ENCODE measurements at regions of chr14 and their contacts with region 1.

Region 1: DNA sequence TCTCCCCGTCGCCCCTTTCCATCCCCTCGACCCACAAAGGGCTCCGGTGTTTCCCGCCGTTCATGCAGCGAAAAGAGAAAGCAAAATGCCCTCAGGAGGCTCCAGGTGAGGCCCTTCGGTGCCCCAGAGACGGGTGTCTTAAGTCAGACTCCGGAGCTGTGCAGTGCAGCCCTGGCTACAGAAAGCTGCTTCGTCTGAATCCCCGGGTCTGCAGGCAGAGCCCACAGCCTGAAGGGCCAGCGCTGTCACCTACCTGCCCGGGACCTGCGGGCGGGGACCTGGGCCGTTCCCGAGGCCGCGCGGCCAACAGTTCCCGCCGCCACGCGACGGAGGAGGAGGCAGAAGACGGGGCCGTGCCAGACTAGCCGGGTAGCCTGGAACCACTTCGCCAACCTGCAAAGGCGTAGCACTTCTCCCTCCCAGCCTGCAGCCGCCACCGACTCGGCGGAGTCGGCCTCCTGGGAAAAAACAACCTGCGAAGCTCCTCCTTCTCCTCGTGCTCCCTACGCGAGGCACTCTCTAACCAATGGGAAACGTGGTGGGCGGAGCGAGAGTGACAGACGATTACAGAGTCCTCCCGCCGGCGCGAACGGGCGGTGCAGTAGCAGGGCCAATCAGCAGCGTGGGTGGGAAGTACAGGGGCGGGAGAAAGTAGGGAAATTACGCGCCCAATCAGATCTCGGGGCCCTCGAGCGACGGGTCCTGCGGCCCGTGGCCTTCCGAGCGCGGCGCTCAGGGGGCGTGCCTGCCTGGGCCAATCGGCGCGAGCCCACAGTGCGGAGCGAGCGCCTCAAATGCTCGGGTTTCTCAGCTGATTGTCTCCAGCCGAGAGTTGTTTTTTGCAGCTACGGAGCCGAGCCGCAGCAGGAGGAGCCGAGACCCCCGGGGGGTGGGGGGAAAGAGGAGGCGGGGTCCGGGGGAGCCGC is at the starts of genes GPR137C and TXNDC16:
- DNase-seq: peak; percentile 100
- H3K4me3 ChIP-seq: peak within 1 kb of the TSS; percentile 65 to 90 (median 89)
- H3K27ac ChIP-seq: peak within 1 kb of the TSS; percentile 91 to 92
- H3K4me1 ChIP-seq: no peaks in the 10 kb centered on the region
- H3K27me3 ChIP-seq: no peaks in the 10 kb centered on the region
- CTCF ChIP-seq: no peak
- POLR2A ChIP-seq: peak; percentile 71
- total RNA-seq, gene GPR137C: 0.33 to 1.2 (median 0.80) TPM
- total RNA-seq, gene TXNDC16: 11.5 to 18.3 (median 13.1) TPM

Region 2: DNA sequence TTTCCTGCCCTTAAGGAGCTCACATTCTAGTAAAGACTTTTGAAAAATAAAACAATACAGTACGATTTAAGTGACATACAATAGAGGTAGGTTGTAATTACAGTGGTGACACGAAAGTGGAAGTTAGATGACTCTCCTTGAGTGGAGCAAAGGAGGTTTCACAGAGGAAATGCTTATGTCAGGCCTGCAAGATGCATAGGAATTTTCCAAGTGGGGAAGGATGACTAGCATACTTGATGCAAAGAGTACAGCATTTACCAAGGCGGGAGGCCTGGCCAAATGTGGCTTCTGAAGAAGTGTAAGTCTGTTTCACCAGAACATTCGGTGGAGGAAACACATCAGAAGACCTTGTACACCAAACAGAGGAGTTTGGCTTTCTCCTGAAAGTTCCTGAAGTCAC is 87.8 kb after region 1 on chr14:
- intact Hi-C with region 1: no loop called
- DNase-seq: no peak
- H3K4me3 ChIP-seq: no peak overlapping the region
- H3K27ac ChIP-seq: no peak overlapping the region
- H3K4me1 ChIP-seq: no peaks in the 10 kb centered on the region
- H3K27me3 ChIP-seq: no peaks in the 10 kb centered on the region
- CTCF ChIP-seq: no peak
- POLR2A ChIP-seq: no peak

Region 3: GRCh38 chr14:52706724-52707706 is 154.7 kb after region 1 on chr14 and contains the start of gene PSMC6:
- intact Hi-C with region 1: loop called (anchors 10 kb)
- DNase-seq: peak; percentile 93 to 95
- H3K4me3 ChIP-seq: peak within 1 kb of the TSS; percentile 76 to 86 (median 82)
- H3K27ac ChIP-seq: peak within 1 kb of the TSS; percentile 91 to 95
- H3K4me1 ChIP-seq: peaks cover 4 to 12% of the 10 kb centered on the region in 2 donors
- H3K27me3 ChIP-seq: no peaks in the 10 kb centered on the region
- CTCF ChIP-seq: no peak
- POLR2A ChIP-seq: peak; percentile 43
- total RNA-seq, gene PSMC6: 78.3 to 106 (median 89.9) TPM

Region 4: DNA sequence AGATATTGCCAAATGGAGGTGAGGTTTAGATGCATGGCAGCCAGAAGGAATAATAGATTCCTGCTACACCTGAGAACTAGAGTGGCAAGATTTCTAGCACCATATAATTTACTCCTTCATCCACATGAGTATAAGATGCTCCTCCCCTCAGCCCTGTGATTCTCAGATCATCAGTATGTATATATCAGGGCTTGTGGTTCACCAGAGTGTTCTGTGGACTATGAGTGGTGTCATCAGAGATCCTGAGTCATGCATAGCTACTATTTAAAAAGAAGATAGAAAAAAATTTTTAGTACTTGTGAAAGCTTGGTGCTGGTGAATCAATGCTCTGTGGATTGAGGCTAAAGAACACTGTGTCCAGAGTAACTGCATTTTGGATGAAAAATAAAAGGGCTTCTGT is 1118.4 kb after region 1 on chr14:
- intact Hi-C with region 1: no loop called
- DNase-seq: no peak
- H3K4me3 ChIP-seq: no peak overlapping the region
- H3K27ac ChIP-seq: no peak overlapping the region
- H3K4me1 ChIP-seq: no peaks in the 10 kb centered on the region
- H3K27me3 ChIP-seq: no peaks in the 10 kb centered on the region
- CTCF ChIP-seq: no peak
- POLR2A ChIP-seq: no peak